PC-9 (cell line): ENCODE measurements at regions of chr5 and their contacts with region 1.

Region 1: DNA sequence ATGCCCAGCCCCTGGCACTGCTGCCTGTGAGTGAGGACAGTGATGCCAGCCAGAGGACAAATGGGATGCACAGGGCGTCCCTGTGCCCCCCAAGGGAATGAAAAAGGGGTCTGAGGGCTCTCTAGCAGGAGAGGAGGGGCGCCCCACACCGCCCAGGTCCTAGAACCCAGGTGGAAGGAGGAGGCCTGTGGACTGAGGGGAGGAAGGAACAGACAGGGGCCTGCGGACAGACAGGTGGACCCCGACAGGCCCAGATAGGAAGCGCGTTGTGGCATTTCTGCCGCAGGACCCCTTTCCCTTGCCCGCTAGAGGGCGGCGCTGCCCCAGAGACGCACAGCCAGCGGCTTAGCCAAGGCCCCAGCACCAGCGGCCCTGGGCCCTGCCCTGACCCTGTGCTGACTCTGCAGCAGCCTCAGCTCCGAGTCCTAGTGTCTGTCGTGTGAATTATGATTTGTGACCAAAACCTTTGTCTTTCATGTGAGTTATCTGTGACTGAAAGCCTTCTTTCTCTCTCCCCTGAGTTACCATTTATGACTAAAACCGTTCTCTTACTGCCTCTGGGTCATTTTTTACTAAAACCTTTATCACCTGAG is 30.7 kb downstream of the TRIP13 start:
- DNase-seq: peak; percentile 60 to 95
- H3K4me3 ChIP-seq: no peak overlapping the region
- H3K27ac ChIP-seq: no peak overlapping the region
- H3K4me1 ChIP-seq: no peaks in the 10 kb centered on the region
- H3K27me3 ChIP-seq: no peaks in the 10 kb centered on the region
- CTCF ChIP-seq: peak; percentile 96

Region 2: GRCh38 chr5:231661-232060 is 691.7 kb before region 1 on chr5:
- CTCF ChIA-PET with region 1: no interaction called
- POLR2A ChIA-PET with region 1: no interaction called
- intact Hi-C with region 1: no loop called
- DNase-seq: no peak
- H3K4me3 ChIP-seq: no peak overlapping the region
- H3K27ac ChIP-seq: no peak overlapping the region
- H3K4me1 ChIP-seq: no peaks in the 10 kb centered on the region
- H3K27me3 ChIP-seq: no peaks in the 10 kb centered on the region
- CTCF ChIP-seq: no peak

Region 3: GRCh38 chr5:555058-555623 is 368.2 kb before region 1 on chr5:
- CTCF ChIA-PET with region 1: no interaction called
- POLR2A ChIA-PET with region 1: no interaction called
- intact Hi-C with region 1: no loop called
- DNase-seq: no peak
- H3K4me3 ChIP-seq: no peak overlapping the region
- H3K27ac ChIP-seq: no peak overlapping the region
- H3K4me1 ChIP-seq: 0 out of 2 replicates have a peak, but pooled peaks cover 6% of the 10 kb centered on the region
- H3K27me3 ChIP-seq: peaks cover 34% of the 10 kb centered on the region
- CTCF ChIP-seq: no peak

Region 4: GRCh38 chr5:1011226-1011631 is 87.9 kb after region 1 on chr5:
- CTCF ChIA-PET with region 1: interaction called, 11 read pairs
- POLR2A ChIA-PET with region 1: no interaction called
- intact Hi-C with region 1: loop called (anchors 1 kb)
- DNase-seq: peak in 1 of 2 experiments; percentile 87
- H3K4me3 ChIP-seq: no peak overlapping the region
- H3K27ac ChIP-seq: no peak overlapping the region
- H3K4me1 ChIP-seq: no peaks in the 10 kb centered on the region
- H3K27me3 ChIP-seq: peaks cover 87% of the 10 kb centered on the region
- CTCF ChIP-seq: peak; percentile 88

Region 5: GRCh38 chr5:1244976-1245375 is 321.6 kb after region 1 on chr5:
- CTCF ChIA-PET with region 1: no interaction called
- POLR2A ChIA-PET with region 1: no interaction called
- intact Hi-C with region 1: loop called (anchors 1 kb)
- DNase-seq: peak in 1 of 2 experiments; percentile 40
- H3K4me3 ChIP-seq: no peak overlapping the region
- H3K27ac ChIP-seq: no peak overlapping the region
- H3K4me1 ChIP-seq: no peaks in the 10 kb centered on the region
- H3K27me3 ChIP-seq: peaks cover 98% of the 10 kb centered on the region
- CTCF ChIP-seq: peak; percentile 57